ENCODE measurements at regions of chr4 and their contacts with region 1.

Region 1: GRCh38 chr4:168153596-168154440 is 61.5 kb downstream of the ANXA10 start:
- DNase-seq: peak; percentile 79
- H3K4me3 ChIP-seq: peak overlapping the region in 2 of 3 experiments; percentile 18 to 51
- H3K27ac ChIP-seq: no peak overlapping the region
- H3K4me1 ChIP-seq: peaks cover 4% of the 10 kb centered on the region
- H3K27me3 ChIP-seq: no peaks in the 10 kb centered on the region
- CTCF ChIP-seq: peak; percentile 57 to 73
- POLR2A ChIP-seq: peak; percentile 29

Region 2: GRCh38 chr4:167021545-167022155 is 1132.2 kb before region 1 on chr4:
- CTCF ChIA-PET with region 1: interaction called, 11 read pairs
- POLR2A ChIA-PET with region 1: no interaction called
- dilution Hi-C with region 1: no loop called
- intact Hi-C with region 1: loop called (anchors 1 kb)
- DNase-seq: peak; percentile 70
- H3K4me3 ChIP-seq: no peak overlapping the region
- H3K27ac ChIP-seq: no peak overlapping the region
- H3K4me1 ChIP-seq: no peaks in the 10 kb centered on the region
- H3K27me3 ChIP-seq: no peaks in the 10 kb centered on the region
- CTCF ChIP-seq: peak; percentile 70 to 77
- POLR2A ChIP-seq: no peak

Region 3: GRCh38 chr4:167745024-167745687 is 408.7 kb before region 1 on chr4:
- CTCF ChIA-PET with region 1: no interaction called
- POLR2A ChIA-PET with region 1: no interaction called
- dilution Hi-C with region 1: no loop called
- intact Hi-C with region 1: loop called (anchors 10 kb)
- DNase-seq: no peak
- H3K4me3 ChIP-seq: no peak overlapping the region
- H3K27ac ChIP-seq: no peak overlapping the region
- H3K4me1 ChIP-seq: no peaks in the 10 kb centered on the region
- H3K27me3 ChIP-seq: no peaks in the 10 kb centered on the region
- CTCF ChIP-seq: no peak
- POLR2A ChIP-seq: no peak

Region 4: DNA sequence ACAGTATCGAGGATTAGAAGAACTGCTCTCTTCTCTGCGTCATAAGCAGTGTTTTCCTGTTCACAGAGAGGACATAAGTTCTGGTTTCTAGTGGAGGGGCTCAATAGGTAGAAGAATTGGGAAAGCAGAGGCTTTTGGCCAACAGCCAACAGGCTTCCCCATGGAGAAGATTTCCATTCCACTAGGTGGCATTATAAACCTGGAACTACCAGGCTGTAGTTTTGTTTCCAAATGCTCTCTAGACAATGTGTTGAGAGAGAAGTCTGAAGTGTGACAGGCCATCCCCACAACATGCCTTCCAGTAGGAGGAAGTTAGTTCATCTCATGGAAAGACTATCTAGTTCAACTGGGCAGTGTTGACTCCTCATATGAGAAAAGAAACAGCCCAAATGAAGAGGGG is 125.2 kb before region 1 on chr4:
- CTCF ChIA-PET with region 1: interaction called, 8 read pairs
- POLR2A ChIA-PET with region 1: no interaction called
- dilution Hi-C with region 1: no loop called
- intact Hi-C with region 1: loop called (anchors 1 kb)
- DNase-seq: peak; percentile 22
- H3K4me3 ChIP-seq: no peak overlapping the region
- H3K27ac ChIP-seq: no peak overlapping the region
- H3K4me1 ChIP-seq: no peaks in the 10 kb centered on the region
- H3K27me3 ChIP-seq: no peaks in the 10 kb centered on the region
- CTCF ChIP-seq: peak in 1 of 2 donors; percentile 18
- POLR2A ChIP-seq: no peak

Region 5: GRCh38 chr4:168098257-168098717 is 55.5 kb before region 1 on chr4:
- CTCF ChIA-PET with region 1: interaction called, 12 read pairs
- POLR2A ChIA-PET with region 1: no interaction called
- dilution Hi-C with region 1: no loop called
- intact Hi-C with region 1: loop called (anchors 5 kb)
- DNase-seq: peak; percentile 91
- H3K4me3 ChIP-seq: no peak overlapping the region
- H3K27ac ChIP-seq: peak overlapping the region; percentile 75
- H3K4me1 ChIP-seq: peaks cover 58% of the 10 kb centered on the region
- H3K27me3 ChIP-seq: no peaks in the 10 kb centered on the region
- CTCF ChIP-seq: no peak
- POLR2A ChIP-seq: peak; percentile 47

Region 6: GRCh38 chr4:168212656-168213055 is 58.8 kb after region 1 on chr4:
- CTCF ChIA-PET with region 1: no interaction called
- POLR2A ChIA-PET with region 1: no interaction called
- dilution Hi-C with region 1: no loop called
- intact Hi-C with region 1: no loop called
- DNase-seq: no peak
- H3K4me3 ChIP-seq: no peak overlapping the region
- H3K27ac ChIP-seq: no peak overlapping the region
- H3K4me1 ChIP-seq: no peaks in the 10 kb centered on the region
- H3K27me3 ChIP-seq: no peaks in the 10 kb centered on the region
- CTCF ChIP-seq: no peak
- POLR2A ChIP-seq: no peak

Measured in endothelial cell of umbilical vein (primary cell).